ENCODE measurements at regions of chr10 and their contacts with region 1.

Region 1: GRCh38 chr10:62159351-62159750 is 109.3 kb downstream of the RTKN2 start:
- DNase-seq: no peak
- ATAC-seq: no peak
- H3K4me3 ChIP-seq: no peak overlapping the region
- H3K27ac ChIP-seq: no peak overlapping the region
- H3K4me1 ChIP-seq: no peaks in the 10 kb centered on the region
- H3K27me3 ChIP-seq: no peaks in the 10 kb centered on the region
- CTCF ChIP-seq: no peak
- POLR2A ChIP-seq: no peak

Region 2: GRCh38 chr10:61733358-61733940 is 425.9 kb before region 1 on chr10:
- intact Hi-C with region 1: no loop called
- DNase-seq: peak in 1 of 5 donors; percentile 10
- ATAC-seq: no peak
- H3K4me3 ChIP-seq: no peak overlapping the region
- H3K27ac ChIP-seq: no peak overlapping the region
- H3K4me1 ChIP-seq: no peaks in the 10 kb centered on the region
- H3K27me3 ChIP-seq: no peaks in the 10 kb centered on the region
- CTCF ChIP-seq: peak; percentile 38 to 68 (median 56)
- POLR2A ChIP-seq: no peak

Region 3: GRCh38 chr10:62016623-62017490 is 142.5 kb before region 1 on chr10:
- intact Hi-C with region 1: no loop called
- DNase-seq: no peak
- ATAC-seq: peak; percentile 31 to 52 (median 44)
- H3K4me3 ChIP-seq: peak overlapping the region in 1 of 12 donors; percentile 15
- H3K27ac ChIP-seq: peak overlapping the region in 10 of 12 donors; percentile 4 to 78 (median 54)
- H3K4me1 ChIP-seq: peaks cover 0 to 61% (median 38%) of the 10 kb centered on the region in 12 donors
- H3K27me3 ChIP-seq: no peaks in the 10 kb centered on the region
- CTCF ChIP-seq: no peak
- POLR2A ChIP-seq: no peak

Region 4: DNA sequence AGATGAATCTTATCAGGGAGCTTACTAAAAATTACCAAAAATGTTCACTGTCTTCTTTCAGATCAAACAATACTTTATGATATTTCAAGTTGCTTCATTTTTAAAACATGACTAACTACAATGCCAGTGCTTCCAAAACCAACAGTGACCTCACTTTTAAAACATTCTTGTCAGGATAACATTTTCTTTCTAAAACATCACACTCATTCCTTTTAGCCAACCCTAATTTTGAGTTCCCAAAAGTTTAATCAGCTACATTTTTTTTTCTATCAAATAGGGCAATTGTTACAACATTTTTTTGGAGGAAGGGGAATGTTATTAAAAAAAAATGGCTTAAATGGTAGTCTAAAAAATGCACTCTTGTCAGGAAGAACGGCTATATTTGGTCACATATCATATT is 72.0 kb after region 1 on chr10:
- intact Hi-C with region 1: loop called in 1 of 10 experiments (anchors 5 kb)
- DNase-seq: no peak
- ATAC-seq: peak in 2 of 4 donors; percentile 47 to 74
- H3K4me3 ChIP-seq: no peak overlapping the region
- H3K27ac ChIP-seq: peak overlapping the region in 4 of 12 donors; percentile 19 to 49 (median 40)
- H3K4me1 ChIP-seq: peaks cover 0 to 14% (median 2%) of the 10 kb centered on the region in 12 donors
- H3K27me3 ChIP-seq: no peaks in the 10 kb centered on the region
- CTCF ChIP-seq: no peak
- POLR2A ChIP-seq: no peak

Region 5: GRCh38 chr10:62243647-62243997 is 84.3 kb after region 1 on chr10:
- intact Hi-C with region 1: no loop called
- DNase-seq: no peak
- ATAC-seq: peak in 1 of 4 donors; percentile 16
- H3K4me3 ChIP-seq: peak overlapping the region in 8 of 12 donors; percentile 2 to 48 (median 21)
- H3K27ac ChIP-seq: peak overlapping the region in 9 of 12 donors; percentile 11 to 85 (median 44)
- H3K4me1 ChIP-seq: peaks cover 0 to 41% (median 6%) of the 10 kb centered on the region in 12 donors
- H3K27me3 ChIP-seq: no peaks in the 10 kb centered on the region
- CTCF ChIP-seq: no peak
- POLR2A ChIP-seq: no peak

Measured in heart left ventricle (tissue), 16 donors.